Endothelial cell of umbilical vein (primary cell): ENCODE measurements at regions of chr15 and their contacts with region 1.

Region 1: GRCh38 chr15:37134699-37135131 is 34.4 kb upstream of the MEIS2 start:
- DNase-seq: peak; percentile 53
- H3K4me3 ChIP-seq: no peak overlapping the region
- H3K27ac ChIP-seq: no peak overlapping the region
- H3K4me1 ChIP-seq: no peaks in the 10 kb centered on the region
- H3K27me3 ChIP-seq: peaks cover 18 to 33% of the 10 kb centered on the region in 2 experiments
- CTCF ChIP-seq: peak; percentile 42 to 54
- POLR2A ChIP-seq: no peak

Region 2: GRCh38 chr15:36501063-36501678 is 633.5 kb before region 1 on chr15:
- CTCF ChIA-PET with region 1: interaction called, 8 read pairs
- POLR2A ChIA-PET with region 1: no interaction called
- dilution Hi-C with region 1: no loop called
- intact Hi-C with region 1: loop called (anchors 1 kb)
- DNase-seq: peak; percentile 69
- H3K4me3 ChIP-seq: no peak overlapping the region
- H3K27ac ChIP-seq: no peak overlapping the region
- H3K4me1 ChIP-seq: peaks cover 4% of the 10 kb centered on the region
- H3K27me3 ChIP-seq: no peaks in the 10 kb centered on the region
- CTCF ChIP-seq: peak; percentile 55 to 64
- POLR2A ChIP-seq: no peak

Region 3: DNA sequence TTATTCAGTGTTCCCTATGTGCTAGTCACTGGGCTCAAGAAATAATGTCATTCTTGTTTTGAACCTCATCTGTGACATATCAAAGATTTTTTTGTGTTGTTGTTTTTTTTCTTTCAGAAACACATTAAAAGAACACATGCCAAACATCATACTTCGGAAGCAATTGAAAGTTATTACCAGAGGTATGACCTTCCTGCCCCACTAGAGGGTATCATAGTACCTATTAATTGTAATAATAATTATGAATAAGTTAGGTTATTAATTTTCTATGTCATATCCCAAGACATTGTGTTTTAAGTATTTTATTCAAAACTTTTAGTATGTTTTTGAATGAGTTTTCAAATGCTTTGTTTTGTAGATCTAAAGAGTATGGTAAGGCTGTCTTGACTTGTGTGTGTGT is 489.6 kb before region 1 on chr15:
- CTCF ChIA-PET with region 1: interaction called, 3 read pairs
- POLR2A ChIA-PET with region 1: no interaction called
- dilution Hi-C with region 1: no loop called
- intact Hi-C with region 1: loop called (anchors 5 kb)
- DNase-seq: peak; percentile 29
- H3K4me3 ChIP-seq: no peak overlapping the region
- H3K27ac ChIP-seq: no peak overlapping the region
- H3K4me1 ChIP-seq: no peaks in the 10 kb centered on the region
- H3K27me3 ChIP-seq: no peaks in the 10 kb centered on the region
- CTCF ChIP-seq: no peak
- POLR2A ChIP-seq: no peak

Region 4: DNA sequence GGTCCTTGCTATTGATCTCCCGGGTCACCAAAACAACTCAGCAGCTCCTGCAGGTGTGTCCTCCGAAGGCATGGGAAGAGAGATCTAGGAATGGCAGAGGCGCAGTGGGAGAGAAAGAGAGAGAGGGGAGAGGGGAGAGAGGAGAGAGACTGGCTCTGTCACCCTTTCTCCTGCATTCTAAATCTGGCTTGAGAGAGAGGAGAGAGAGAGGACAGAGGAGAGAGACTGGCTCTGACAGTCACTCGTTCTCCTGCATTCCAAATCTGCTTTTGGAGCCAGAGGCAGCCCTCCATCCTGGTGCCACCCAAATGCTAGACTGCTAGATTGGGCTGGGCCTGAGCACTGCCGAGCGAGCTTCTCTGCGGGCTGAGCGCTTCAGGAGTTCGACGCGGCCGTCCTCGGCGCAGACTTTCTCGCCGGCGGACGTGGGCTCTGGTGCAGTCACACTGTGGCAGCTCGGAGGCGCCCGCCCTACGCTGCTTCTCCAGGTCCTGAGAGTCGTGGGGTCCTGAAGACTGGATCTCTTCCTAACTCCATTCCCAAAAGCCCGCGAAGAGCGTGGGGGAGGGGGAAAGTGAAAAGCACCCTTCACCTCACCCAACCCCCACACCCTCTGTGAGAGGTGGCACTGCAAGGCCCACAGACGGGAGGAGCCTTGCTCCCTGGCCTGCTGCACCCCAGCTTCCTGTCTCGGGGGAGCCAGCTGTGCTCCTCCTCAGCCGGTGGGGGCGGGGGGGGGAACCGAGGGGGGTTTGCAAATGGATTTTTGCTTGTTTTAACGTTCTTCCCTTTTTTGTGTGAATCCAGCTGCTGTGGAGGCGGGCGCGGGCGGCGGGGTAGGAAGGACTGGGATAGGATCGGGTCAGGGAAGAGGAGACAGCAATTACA is 256.7 kb before region 1 on chr15:
- CTCF ChIA-PET with region 1: interaction called, 77 read pairs
- POLR2A ChIA-PET with region 1: no interaction called
- dilution Hi-C with region 1: no loop called
- intact Hi-C with region 1: loop called (anchors 1 kb)
- DNase-seq: no peak
- H3K4me3 ChIP-seq: no peak overlapping the region
- H3K27ac ChIP-seq: no peak overlapping the region
- H3K4me1 ChIP-seq: peaks cover 3% of the 10 kb centered on the region
- H3K27me3 ChIP-seq: peaks cover 73 to 94% of the 10 kb centered on the region in 2 experiments
- CTCF ChIP-seq: no peak
- POLR2A ChIP-seq: no peak

Region 5: DNA sequence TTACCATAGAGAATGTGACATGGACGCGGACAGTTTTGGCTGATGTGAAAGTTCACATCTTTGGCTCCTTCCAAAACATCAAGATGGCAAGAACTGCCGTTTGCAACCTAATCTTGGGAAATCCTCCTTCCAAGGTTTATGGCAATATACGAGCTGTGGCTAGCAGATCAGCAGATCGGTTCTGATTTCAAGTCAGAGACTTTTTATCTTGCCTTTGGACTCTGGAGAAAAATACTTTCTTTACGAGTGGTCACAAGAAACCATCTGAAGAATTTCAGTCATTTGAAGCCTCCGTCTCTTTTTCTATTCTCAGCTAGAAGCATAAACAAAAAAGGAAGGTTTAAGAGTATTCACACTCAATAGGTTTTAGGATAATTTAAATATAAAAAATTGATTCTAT is 119.2 kb after region 1 on chr15:
- CTCF ChIA-PET with region 1: no interaction called
- POLR2A ChIA-PET with region 1: no interaction called
- dilution Hi-C with region 1: no loop called
- intact Hi-C with region 1: no loop called
- DNase-seq: no peak
- H3K4me3 ChIP-seq: no peak overlapping the region
- H3K27ac ChIP-seq: no peak overlapping the region
- H3K4me1 ChIP-seq: no peaks in the 10 kb centered on the region
- H3K27me3 ChIP-seq: no peaks in the 10 kb centered on the region
- CTCF ChIP-seq: no peak
- POLR2A ChIP-seq: no peak